A673 (cell line): ENCODE measurements at regions of chr10 and their contacts with region 1.

Region 1: DNA sequence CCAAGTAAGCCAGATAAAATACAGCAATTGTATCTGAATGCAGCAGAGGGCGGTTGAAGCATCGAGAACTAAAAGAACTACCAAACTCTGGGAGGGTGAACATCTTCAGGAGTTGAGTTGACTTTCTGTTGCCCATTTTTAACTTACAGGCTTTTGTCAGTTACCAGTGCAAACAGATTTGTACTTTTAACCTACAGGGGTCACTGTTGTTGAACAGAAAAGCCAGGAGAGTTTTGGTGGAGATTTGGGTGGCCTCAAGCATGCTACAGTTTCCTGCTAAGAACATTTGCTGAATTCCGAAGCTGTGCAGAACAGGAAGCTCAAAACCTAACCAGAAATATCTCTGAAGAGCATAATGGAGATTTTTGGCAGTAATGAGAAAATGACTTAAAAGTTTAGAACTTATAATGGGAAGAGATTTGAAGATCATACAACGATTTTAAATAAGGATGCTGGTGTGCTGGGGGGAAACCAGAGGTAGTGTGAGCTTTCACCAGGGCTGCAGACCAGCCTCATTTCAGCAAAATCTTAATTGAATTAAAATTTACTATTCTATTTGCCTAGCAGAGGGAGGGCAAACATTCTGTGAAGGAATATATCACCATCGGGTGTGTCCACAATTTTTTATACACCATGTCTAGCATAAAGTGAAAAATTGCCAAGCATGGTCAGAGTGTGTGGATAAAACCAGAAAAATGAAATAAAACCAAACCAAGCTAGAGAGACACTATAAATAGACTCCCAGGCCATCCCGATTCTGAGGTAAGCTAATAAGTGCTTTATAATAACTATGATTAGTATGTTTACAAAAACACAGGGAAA is 208.6 kb upstream of the CCDC6 start:
- DNase-seq: peak; percentile 72
- H3K4me3 ChIP-seq: no peak overlapping the region
- H3K27ac ChIP-seq: no peak overlapping the region
- H3K4me1 ChIP-seq: no peaks in the 10 kb centered on the region
- H3K27me3 ChIP-seq: no peaks in the 10 kb centered on the region
- CTCF ChIP-seq: peak; percentile 63

Region 2: GRCh38 chr10:60208676-60209269 is 93.8 kb after region 1 on chr10:
- CTCF ChIA-PET with region 1: no interaction called
- POLR2A ChIA-PET with region 1: no interaction called
- intact Hi-C with region 1: loop called (anchors 2 kb)
- DNase-seq: peak; percentile 60
- H3K4me3 ChIP-seq: no peak overlapping the region
- H3K27ac ChIP-seq: no peak overlapping the region
- H3K4me1 ChIP-seq: no peaks in the 10 kb centered on the region
- H3K27me3 ChIP-seq: no peaks in the 10 kb centered on the region
- CTCF ChIP-seq: peak; percentile 80